ENCODE measurements at regions of chr5 and their contacts with region 1.

Region 1: GRCh38 chr5:143824851-143825720 is 13.1 kb downstream of the HMHB1 start:
- DNase-seq: peak; percentile 12 to 86
- H3K4me3 ChIP-seq: no peak overlapping the region
- H3K27ac ChIP-seq: no peak overlapping the region
- H3K4me1 ChIP-seq: no peaks in the 10 kb centered on the region
- H3K27me3 ChIP-seq: no peaks in the 10 kb centered on the region
- CTCF ChIP-seq: peak; percentile 71 to 98 (median 84)

Region 2: DNA sequence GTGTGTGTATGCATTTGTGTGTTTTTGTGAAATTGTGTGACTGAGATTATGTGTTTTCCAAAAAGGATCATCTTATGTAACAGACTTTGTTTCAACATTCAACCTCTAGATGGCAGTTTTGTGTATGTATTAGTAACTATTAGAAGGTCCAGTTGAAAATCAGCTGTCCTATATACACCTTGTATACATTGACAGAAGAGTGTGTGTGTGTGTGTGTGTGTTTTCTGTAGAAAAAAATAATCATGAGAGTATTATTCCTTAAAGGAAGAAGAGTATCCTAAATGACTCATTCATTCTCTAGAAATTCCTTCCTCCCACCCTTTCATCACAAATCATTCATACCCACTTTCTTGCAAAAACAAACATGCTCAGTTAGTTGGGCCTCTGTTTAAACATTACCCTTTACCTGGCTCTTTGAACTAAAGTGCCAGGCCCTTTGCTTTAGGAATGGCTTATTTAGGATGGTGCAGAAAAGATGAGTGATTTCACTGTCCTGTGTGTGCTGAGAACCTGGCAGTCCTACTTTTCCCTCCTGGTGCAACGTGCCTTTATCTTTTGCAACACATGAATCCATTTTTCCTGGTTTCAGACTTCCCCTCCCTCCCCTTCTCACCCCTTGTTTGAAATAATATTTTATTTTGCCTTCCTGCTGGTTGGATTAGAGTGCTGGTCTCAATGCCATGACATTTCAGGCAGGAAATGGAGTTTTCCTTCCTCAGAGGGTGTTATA is 902.7 kb before region 1 on chr5:
- intact Hi-C with region 1: loop called (anchors 1 kb)
- DNase-seq: no peak
- H3K4me3 ChIP-seq: no peak overlapping the region
- H3K27ac ChIP-seq: no peak overlapping the region
- H3K4me1 ChIP-seq: no peaks in the 10 kb centered on the region
- H3K27me3 ChIP-seq: no peaks in the 10 kb centered on the region
- CTCF ChIP-seq: peak; percentile 28 to 51 (median 34)

Region 3: DNA sequence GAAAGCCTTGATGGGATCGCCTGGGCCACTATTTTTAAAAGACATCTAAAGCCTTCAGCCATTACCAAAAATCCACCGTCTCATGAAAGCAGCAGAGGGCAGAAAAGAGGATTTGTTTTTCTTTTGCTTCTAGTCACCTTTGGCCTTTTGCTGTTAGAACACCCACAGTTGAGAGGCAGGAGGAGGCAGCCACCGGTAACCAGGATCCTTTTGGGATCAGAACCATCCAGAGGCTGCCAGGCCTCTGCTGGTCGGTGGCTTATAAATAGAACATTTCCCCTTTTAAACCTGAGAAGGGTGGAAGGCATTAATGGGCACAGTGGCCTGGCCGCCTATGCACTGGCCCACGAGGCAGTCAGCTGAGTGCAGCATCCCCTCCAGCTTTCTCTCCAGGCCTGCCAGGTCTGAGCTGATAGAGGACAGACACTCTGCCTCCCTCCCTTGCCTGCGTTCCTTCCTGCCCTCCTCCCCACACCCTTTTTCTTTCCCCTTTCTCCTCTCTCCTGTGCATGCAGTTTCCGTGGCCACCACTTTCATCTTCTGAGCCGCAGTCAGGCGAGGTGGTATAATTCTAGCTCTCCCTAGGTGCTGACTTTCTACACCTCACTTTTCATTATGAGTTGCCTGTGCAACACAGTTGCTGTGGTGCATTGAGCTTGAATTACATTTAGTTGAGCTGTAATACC is 801.5 kb before region 1 on chr5:
- intact Hi-C with region 1: loop called (anchors 5 kb)
- DNase-seq: no peak
- H3K4me3 ChIP-seq: no peak overlapping the region
- H3K27ac ChIP-seq: peak overlapping the region in 1 of 2 donors; percentile 16
- H3K4me1 ChIP-seq: peaks cover 0 to 7% of the 10 kb centered on the region in 2 donors
- H3K27me3 ChIP-seq: no peaks in the 10 kb centered on the region
- CTCF ChIP-seq: no peak

Region 4: GRCh38 chr5:143106174-143106573 is 718.9 kb before region 1 on chr5:
- intact Hi-C with region 1: loop called (anchors 10 kb)
- DNase-seq: no peak
- H3K4me3 ChIP-seq: no peak overlapping the region
- H3K27ac ChIP-seq: no peak overlapping the region
- H3K4me1 ChIP-seq: peaks cover 0 to 13% of the 10 kb centered on the region in 2 donors
- H3K27me3 ChIP-seq: no peaks in the 10 kb centered on the region
- CTCF ChIP-seq: peak in 1 of 3 experiments; percentile 18

Region 5: DNA sequence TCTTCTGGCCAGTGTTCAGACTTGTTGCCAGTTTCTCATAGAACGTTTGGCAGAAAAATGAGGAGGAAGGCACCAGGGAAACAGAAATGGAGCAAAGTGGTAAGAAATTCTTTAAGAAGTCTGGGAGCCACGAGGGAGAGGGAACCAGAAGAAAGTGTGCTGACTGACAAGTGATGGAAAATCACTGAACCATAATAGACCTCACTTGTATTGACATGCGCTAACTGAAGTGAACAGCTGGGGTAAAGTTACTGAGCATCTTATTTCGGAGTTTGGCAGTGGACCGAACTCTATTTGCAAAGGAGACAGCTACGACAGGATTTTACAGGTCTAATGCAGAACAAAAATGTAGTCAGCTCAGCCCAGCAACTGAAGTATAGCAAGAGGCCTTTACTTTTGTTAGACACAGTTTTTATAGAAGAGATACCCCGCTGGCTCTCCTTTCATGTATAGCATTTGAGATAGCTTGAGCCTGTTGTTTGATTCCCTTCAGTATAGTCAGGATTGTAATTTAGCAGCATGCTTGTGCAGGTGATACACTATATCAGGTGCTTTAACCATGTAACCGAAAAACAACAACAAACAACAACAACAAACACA is 40.4 kb after region 1 on chr5:
- intact Hi-C with region 1: no loop called
- DNase-seq: no peak
- H3K4me3 ChIP-seq: no peak overlapping the region
- H3K27ac ChIP-seq: no peak overlapping the region
- H3K4me1 ChIP-seq: no peaks in the 10 kb centered on the region
- H3K27me3 ChIP-seq: no peaks in the 10 kb centered on the region
- CTCF ChIP-seq: no peak